H1 (cell line): ENCODE measurements at regions of chr2 and their contacts with region 1.

Region 1: GRCh38 chr2:27347641-27348040 is 8.9 kb downstream of the GTF3C2 start:
- DNase-seq: no peak
- H3K4me3 ChIP-seq: no peak overlapping the region
- H3K27ac ChIP-seq: no peak overlapping the region
- H3K4me1 ChIP-seq: no peaks in the 10 kb centered on the region
- H3K27me3 ChIP-seq: no peaks in the 10 kb centered on the region
- CTCF ChIP-seq: no peak
- EP300 ChIP-seq: no peak
- POLR2A ChIP-seq: no peak
- RAD21 ChIP-seq: no peak

Region 2: DNA sequence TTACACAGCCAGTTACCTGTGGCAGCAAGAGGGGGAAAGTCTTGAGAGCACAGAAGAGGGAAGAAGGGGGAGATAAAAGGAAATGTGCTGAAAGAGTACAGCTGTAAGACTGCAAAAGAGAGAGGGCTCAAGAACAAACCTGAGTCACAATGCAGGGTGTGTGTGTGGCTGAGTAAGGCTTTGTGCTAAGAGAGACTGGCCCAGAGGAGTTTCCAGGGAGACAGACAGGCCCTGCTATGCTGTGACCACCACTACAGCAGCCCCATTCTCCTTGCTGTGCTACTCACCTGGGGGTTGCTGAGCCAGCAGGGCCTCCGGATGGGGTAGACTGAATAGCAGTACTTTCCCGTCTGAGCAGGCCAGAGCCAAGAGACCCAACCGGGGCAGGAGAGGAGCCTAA is 12.3 kb before region 1 on chr2:
- CTCF ChIA-PET with region 1: interaction called, 8 read pairs
- POLR2A ChIA-PET with region 1: interaction called, 16 read pairs
- DNase-seq: no peak
- H3K4me3 ChIP-seq: no peak overlapping the region
- H3K27ac ChIP-seq: no peak overlapping the region
- H3K4me1 ChIP-seq: no peaks in the 10 kb centered on the region
- H3K27me3 ChIP-seq: no peaks in the 10 kb centered on the region
- CTCF ChIP-seq: no peak
- EP300 ChIP-seq: no peak
- POLR2A ChIP-seq: no peak
- RAD21 ChIP-seq: no peak

Region 3: GRCh38 chr2:27461118-27461517 is 113.5 kb after region 1 on chr2:
- CTCF ChIA-PET with region 1: no interaction called
- POLR2A ChIA-PET with region 1: no interaction called
- DNase-seq: no peak
- H3K4me3 ChIP-seq: no peak overlapping the region
- H3K27ac ChIP-seq: no peak overlapping the region
- H3K4me1 ChIP-seq: peaks cover 0 to 4% (median 1%) of the 10 kb centered on the region in 4 experiments; a peak in 1 of 7 replicates
- H3K27me3 ChIP-seq: no peaks in the 10 kb centered on the region
- CTCF ChIP-seq: no peak
- EP300 ChIP-seq: no peak
- POLR2A ChIP-seq: no peak
- RAD21 ChIP-seq: no peak